GM12878 (cell line): ENCODE measurements at regions of chr5 and their contacts with region 1.

Region 1: GRCh38 chr5:151115274-151115905 is 34.6 kb upstream of the TNIP1 start:
- DNase-seq: no peak
- ATAC-seq: peak; percentile 82
- H3K4me3 ChIP-seq: no peak overlapping the region
- H3K27ac ChIP-seq: no peak overlapping the region
- H3K4me1 ChIP-seq: peaks cover 17% of the 10 kb centered on the region
- H3K27me3 ChIP-seq: no peaks in the 10 kb centered on the region
- CTCF ChIP-seq: peak; percentile 78 to 95 (median 94)
- EP300 ChIP-seq: no peak
- POLR2A ChIP-seq: no peak
- RAD21 ChIP-seq: peak; percentile 92

Region 2: GRCh38 chr5:151002250-151002649 is 113.1 kb before region 1 on chr5:
- CTCF ChIA-PET with region 1: interaction called, 17 read pairs
- POLR2A ChIA-PET with region 1: no interaction called
- RAD21 ChIA-PET with region 1: interaction called, 5 read pairs
- SMC1A ChIA-PET with region 1: interaction called, 8 read pairs
- in situ Hi-C with region 1: no loop called
- intact Hi-C with region 1: no loop called
- DNase-seq: no peak
- ATAC-seq: no peak
- H3K4me3 ChIP-seq: no peak overlapping the region
- H3K27ac ChIP-seq: no peak overlapping the region
- H3K4me1 ChIP-seq: no peaks in the 10 kb centered on the region
- H3K27me3 ChIP-seq: no peaks in the 10 kb centered on the region
- CTCF ChIP-seq: no peak; a peak in 1 of 6 replicates
- EP300 ChIP-seq: no peak
- POLR2A ChIP-seq: no peak
- RAD21 ChIP-seq: peak; percentile 42

Region 3: DNA sequence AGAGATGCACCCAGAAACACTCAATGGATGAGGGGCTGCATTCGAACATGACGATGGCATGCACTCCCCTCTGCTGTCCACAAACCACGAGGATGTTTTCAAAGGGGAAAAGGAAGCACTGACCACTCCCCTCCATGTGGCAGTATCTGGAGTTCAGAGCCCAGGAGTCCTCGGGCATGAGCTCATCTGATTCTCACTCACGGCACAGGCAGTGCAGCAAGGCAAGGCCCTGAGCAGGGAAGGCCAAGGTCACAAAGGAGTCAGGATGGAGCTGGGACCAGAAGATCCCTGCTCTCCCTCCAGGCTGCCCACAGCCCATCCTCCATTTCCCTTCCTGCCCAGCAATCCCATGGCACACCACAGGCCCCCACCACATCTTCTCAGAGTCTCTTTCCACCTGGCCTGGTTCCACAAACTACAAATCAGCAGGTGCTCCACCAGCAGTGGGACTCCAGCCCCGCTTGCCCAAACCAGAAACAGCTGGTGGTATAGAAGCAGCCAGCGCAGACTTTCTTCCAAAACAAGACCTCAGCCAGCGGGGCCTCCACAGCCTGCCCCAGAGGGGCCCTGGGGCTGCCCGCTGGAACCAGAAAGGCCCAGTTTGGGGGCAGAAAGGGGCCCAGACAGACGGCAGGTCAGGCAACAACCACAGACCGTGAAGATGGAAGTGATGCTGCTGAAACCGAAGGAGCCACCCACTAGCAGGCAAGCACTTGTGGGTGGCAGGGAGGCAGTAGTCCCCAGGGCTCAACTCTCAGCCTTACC is 46.8 kb before region 1 on chr5:
- CTCF ChIA-PET with region 1: interaction called, 60 read pairs
- POLR2A ChIA-PET with region 1: interaction called, 4 read pairs
- RAD21 ChIA-PET with region 1: interaction called, 30 read pairs
- SMC1A ChIA-PET with region 1: interaction called, 97 read pairs
- in situ Hi-C with region 1: no loop called
- intact Hi-C with region 1: no loop called
- DNase-seq: no peak
- ATAC-seq: peak; percentile 78
- H3K4me3 ChIP-seq: peak overlapping the region; percentile 6; the same call in 1 of the 2 replicates
- H3K27ac ChIP-seq: peak overlapping the region; percentile 65
- H3K4me1 ChIP-seq: peaks cover 77% of the 10 kb centered on the region
- H3K27me3 ChIP-seq: no peaks in the 10 kb centered on the region
- CTCF ChIP-seq: no peak
- EP300 ChIP-seq: peak in 1 of 2 experiments; percentile 16; a peak in 1 of 4 replicates
- POLR2A ChIP-seq: no peak; the same call in none of the 2 replicates
- RAD21 ChIP-seq: no peak

Region 4: GRCh38 chr5:151104795-151105194 is 10.6 kb before region 1 on chr5:
- CTCF ChIA-PET with region 1: interaction called, 78 read pairs
- POLR2A ChIA-PET with region 1: interaction called, 13 read pairs
- RAD21 ChIA-PET with region 1: interaction called, 45 read pairs
- SMC1A ChIA-PET with region 1: interaction called, 66 read pairs
- in situ Hi-C with region 1: no loop called
- intact Hi-C with region 1: no loop called
- DNase-seq: no peak
- ATAC-seq: no peak
- H3K4me3 ChIP-seq: no peak overlapping the region
- H3K27ac ChIP-seq: no peak overlapping the region
- H3K4me1 ChIP-seq: peaks cover 8% of the 10 kb centered on the region
- H3K27me3 ChIP-seq: no peaks in the 10 kb centered on the region
- CTCF ChIP-seq: no peak
- EP300 ChIP-seq: no peak
- POLR2A ChIP-seq: no peak
- RAD21 ChIP-seq: no peak

Region 5: DNA sequence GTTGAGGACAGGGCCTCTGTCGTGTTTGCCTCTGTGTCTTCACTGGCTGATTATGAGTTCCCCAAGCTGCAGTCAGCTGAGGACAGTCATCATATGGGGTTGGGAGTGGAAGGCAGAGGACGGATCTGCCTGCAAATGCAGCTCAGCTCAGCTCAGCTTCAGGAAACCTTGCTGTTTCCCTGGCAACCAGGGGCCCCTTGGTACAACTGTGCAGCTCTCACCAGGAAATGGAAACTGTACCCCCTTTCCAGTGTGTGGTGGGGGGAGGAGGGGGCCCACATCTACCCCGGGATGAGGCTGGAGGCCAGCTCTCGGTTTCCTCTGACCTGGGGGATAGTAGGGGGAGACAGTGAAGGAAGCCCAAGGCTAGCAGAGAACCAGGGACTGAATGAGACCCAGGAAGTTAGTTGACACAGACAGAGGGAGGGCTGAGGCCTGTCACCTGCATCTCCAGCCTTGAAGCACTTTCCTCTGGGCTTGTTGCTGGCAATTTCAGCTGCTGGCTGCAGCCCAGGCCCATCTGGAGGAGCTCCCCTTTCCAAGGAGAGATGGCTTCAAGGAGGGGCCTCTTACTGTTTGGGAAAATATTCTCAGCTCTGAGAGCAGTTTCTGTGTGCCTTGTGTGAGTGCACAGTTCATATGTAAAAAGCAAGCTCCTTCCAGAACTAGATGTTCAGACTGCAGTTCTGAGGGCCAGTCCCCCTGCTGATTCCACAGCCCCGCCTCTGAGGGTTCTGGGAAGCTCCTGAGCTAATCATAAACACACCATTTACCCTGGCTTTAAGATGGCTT is 35.3 kb after region 1 on chr5:
- CTCF ChIA-PET with region 1: interaction called, 1,107 read pairs
- POLR2A ChIA-PET with region 1: interaction called, 5 read pairs
- RAD21 ChIA-PET with region 1: interaction called, 6 read pairs
- SMC1A ChIA-PET with region 1: interaction called, 1,132 read pairs
- in situ Hi-C with region 1: no loop called
- intact Hi-C with region 1: no loop called
- DNase-seq: peak; percentile 50
- ATAC-seq: peak; percentile 51
- H3K4me3 ChIP-seq: peak overlapping the region; percentile 57
- H3K27ac ChIP-seq: peak overlapping the region; percentile 89
- H3K4me1 ChIP-seq: peaks cover 62% of the 10 kb centered on the region
- H3K27me3 ChIP-seq: no peaks in the 10 kb centered on the region
- CTCF ChIP-seq: no peak
- EP300 ChIP-seq: no peak
- POLR2A ChIP-seq: peak; percentile 70
- RAD21 ChIP-seq: no peak

Region 6: GRCh38 chr5:151213800-151214613 is 98.6 kb after region 1 on chr5:
- CTCF ChIA-PET with region 1: interaction called, 10 read pairs
- POLR2A ChIA-PET with region 1: no interaction called
- RAD21 ChIA-PET with region 1: interaction called, 15 read pairs
- SMC1A ChIA-PET with region 1: interaction called, 10 read pairs
- in situ Hi-C with region 1: no loop called
- intact Hi-C with region 1: no loop called
- DNase-seq: peak; percentile 93
- ATAC-seq: peak; percentile 83
- H3K4me3 ChIP-seq: peak overlapping the region; percentile 74
- H3K27ac ChIP-seq: peak overlapping the region; percentile 99
- H3K4me1 ChIP-seq: peaks cover 57% of the 10 kb centered on the region
- H3K27me3 ChIP-seq: no peaks in the 10 kb centered on the region
- CTCF ChIP-seq: no peak
- EP300 ChIP-seq: peak in 1 of 2 experiments; percentile 64; a peak in 1 of 4 replicates
- POLR2A ChIP-seq: peak; percentile 93
- RAD21 ChIP-seq: no peak

Region 7: DNA sequence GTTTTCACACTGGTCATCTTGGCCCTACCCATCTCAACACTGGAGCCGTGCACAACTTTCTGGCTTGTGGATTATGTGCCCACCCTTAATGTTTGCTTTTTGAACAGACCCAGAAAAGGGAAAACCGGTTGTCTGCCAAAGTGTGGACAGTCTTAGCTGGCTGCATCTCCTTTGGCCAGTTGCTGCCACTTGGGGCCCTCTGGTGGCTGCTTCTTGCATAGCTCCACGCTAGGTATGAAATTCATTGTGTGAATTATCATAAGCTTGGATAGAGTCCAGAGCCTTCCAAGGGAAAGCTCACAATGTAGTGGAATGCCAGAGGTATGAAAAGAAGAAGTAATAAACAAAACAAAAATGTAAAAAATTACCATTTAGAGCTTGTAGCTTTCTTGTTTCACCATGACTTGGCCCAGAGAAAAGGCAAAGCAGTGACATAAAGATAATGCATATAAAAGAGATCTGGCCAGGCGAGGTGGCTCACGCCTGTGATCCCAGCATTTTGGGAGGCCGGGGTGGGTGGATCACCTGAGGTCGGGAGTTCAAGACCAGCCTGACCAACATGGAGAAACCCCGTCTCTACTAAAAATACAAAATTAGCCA is 200.7 kb after region 1 on chr5:
- CTCF ChIA-PET with region 1: interaction called, 11 read pairs
- POLR2A ChIA-PET with region 1: interaction called, 3 read pairs
- RAD21 ChIA-PET with region 1: interaction called, 7 read pairs
- SMC1A ChIA-PET with region 1: interaction called, 7 read pairs
- in situ Hi-C with region 1: no loop called
- intact Hi-C with region 1: no loop called
- DNase-seq: peak; percentile 7
- ATAC-seq: peak; percentile 95
- H3K4me3 ChIP-seq: no peak overlapping the region
- H3K27ac ChIP-seq: no peak overlapping the region
- H3K4me1 ChIP-seq: no peaks in the 10 kb centered on the region
- H3K27me3 ChIP-seq: no peaks in the 10 kb centered on the region; a peak in 1 of 4 replicates
- CTCF ChIP-seq: peak; percentile 93 to 95 (median 94); a peak in 5 of 6 replicates
- EP300 ChIP-seq: no peak
- POLR2A ChIP-seq: no peak
- RAD21 ChIP-seq: peak; percentile 86